Activated T-helper 1 cell treated with anti-CD3 and anti-CD28 coated beads, Interleukin-12 subunit alpha, Interleukin-12 subunit beta, Interleukin-2, Interleukin-4 antibody, amounts not matched to agents 30 ng/mL and 10 ng/mL and 1 ng/mL, durations not matched to agents 14 hours and 24 hours and 36 hours (primary cell): ENCODE measurements at regions of chr5 and their contacts with region 1.

Region 1: DNA sequence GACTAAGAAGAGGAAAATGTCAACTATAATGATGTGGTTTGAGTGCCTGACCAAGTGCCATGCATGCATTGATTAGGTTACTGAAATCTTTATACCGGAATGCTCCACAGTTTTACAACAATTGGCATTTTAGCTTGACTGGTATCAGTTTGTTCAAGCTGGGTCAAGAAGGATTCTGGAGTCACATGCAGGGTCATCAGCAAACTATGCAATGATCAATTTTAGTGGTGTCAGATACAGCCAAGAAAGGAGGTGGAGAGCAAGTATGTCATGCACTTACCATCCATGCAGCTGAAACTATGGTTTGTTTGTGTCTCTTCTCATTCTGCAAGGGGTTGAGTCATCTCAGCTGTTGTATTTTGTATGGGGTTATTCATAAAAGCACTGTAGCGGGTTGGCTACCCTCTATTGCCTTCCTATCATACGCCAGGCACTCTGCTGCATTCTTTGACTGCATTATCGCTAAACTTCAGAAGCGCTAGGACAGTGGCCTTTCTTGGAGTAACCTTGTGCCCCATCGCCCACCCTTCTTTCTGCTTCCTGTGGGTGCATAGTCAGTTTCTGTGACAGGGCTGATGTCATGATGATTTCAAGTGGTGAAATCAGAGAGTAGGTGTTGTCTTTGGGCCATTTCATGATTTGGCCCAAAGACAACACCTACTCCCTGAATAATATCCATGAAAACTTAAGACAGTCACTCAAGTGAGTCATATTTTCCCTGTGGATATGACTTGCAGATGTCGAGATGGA is 145.4 kb downstream of the MTX3 start:
- DNase-seq: peak; percentile 20
- H3K4me3 Mint-ChIP-seq: no peak overlapping the region
- H3K27ac Mint-ChIP-seq: peak overlapping the region; percentile 84
- H3K4me1 Mint-ChIP-seq: peaks cover 26% of the 10 kb centered on the region
- H3K27me3 Mint-ChIP-seq: peaks cover 4% of the 10 kb centered on the region

Region 2: GRCh38 chr5:79235634-79236363 is 609.8 kb before region 1 on chr5 and contains the start of gene JMY:
- intact Hi-C with region 1: loop called (anchors 5 kb)
- DNase-seq: peak; percentile 77
- H3K4me3 Mint-ChIP-seq: peak within 1 kb of the TSS; percentile 94
- H3K27ac Mint-ChIP-seq: peak within 1 kb of the TSS; percentile 95
- H3K4me1 Mint-ChIP-seq: peaks cover 33% of the 10 kb centered on the region
- H3K27me3 Mint-ChIP-seq: peaks cover 2% of the 10 kb centered on the region
- total RNA-seq, gene JMY: 5.5 and 5.9 TPM in 2 replicates

Region 3: DNA sequence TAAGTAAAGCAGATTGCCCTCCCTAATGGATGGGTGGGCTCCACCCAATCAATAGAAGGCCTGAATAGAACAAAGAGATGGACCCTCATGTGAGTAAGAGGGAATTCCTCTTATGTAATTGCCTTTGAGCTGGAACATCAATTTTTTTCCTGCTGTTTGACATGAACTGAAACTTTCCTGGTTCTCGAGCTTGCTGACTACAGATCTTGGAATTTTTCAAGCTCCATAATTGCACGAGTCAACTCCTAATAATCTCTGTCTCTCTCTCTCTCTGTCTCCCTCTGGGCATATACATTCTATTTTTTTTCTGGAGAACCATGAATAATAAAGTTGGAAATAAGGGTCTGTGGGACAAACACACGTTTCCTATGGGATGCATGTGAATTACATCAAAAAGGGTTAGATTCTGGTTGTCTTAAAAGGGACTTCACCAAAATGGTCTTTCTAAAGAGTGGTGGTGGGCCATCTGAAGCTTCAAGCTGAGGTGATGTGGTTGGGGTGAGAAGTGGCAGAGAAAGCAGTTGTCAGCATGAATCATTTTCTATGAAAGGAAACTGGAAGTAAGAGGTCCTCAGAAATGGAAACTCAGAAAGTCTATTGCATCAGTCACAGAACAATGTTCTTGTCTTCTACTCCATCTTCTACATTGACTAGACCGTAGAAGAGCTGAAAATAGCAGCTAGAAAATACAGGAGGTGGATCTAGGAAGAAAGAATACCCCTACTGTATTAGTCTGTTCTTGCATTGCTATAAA is 284.7 kb before region 1 on chr5:
- intact Hi-C with region 1: loop called (anchors 1 kb)
- DNase-seq: peak; percentile 8
- H3K4me3 Mint-ChIP-seq: peak overlapping the region; percentile 67
- H3K27ac Mint-ChIP-seq: peak overlapping the region; percentile 89
- H3K4me1 Mint-ChIP-seq: peaks cover 44% of the 10 kb centered on the region
- H3K27me3 Mint-ChIP-seq: no peaks in the 10 kb centered on the region

Region 4: DNA sequence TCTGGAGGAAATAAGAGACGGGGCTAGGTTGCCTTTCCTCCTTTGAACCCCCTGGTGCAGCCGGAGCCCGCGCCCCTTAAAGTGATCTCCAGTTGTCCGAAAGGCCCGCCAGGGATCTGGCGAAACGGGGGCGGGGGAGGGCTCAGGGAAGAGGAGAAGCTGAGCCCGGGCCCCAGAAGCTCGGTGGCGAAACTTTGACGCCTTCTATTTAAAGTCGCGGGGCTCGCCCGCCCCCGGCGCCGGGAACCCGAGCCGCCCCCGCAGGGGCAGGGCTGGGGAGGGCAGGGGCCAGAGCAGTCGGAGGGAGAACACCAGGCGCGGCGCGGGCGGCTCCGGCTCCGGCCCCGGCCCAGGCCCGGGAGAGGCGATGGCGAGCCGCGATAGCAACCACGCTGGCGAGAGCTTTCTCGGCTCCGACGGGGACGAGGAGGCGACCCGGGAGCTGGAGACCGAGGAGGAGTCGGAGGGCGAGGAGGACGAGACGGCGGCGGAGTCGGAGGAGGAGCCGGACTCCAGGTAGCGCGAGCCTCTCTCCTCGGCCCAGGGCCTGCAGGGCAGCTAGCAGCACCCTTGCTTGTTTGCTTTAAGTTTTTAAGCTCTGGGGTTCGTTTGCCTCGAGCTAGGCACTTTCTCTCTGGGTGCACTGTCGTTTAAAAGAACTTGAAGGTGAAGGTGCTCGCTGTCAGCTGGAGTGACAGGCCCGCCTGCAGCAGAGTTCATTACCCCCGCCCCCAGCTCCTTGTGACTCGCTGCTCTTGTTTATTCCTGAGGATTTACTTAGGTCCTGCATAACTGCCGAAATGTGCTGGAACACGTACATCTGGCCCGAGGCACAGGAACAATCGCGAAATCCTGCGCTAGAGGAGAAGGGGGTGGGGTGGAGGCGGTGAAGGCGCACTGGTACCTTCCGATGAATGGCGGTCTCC is 155.8 kb before region 1 on chr5 and contains the start of gene CMYA5:
- intact Hi-C with region 1: no loop called
- DNase-seq: no peak
- H3K4me3 Mint-ChIP-seq: no peak within 1 kb of the TSS
- H3K27ac Mint-ChIP-seq: no peak within 1 kb of the TSS
- H3K4me1 Mint-ChIP-seq: peaks cover 7% of the 10 kb centered on the region
- H3K27me3 Mint-ChIP-seq: no peaks in the 10 kb centered on the region
- total RNA-seq, gene CMYA5: 0.10 and 0.15 TPM in 2 replicates

Region 5: GRCh38 chr5:79736528-79737514 is 108.8 kb before region 1 on chr5:
- intact Hi-C with region 1: loop called (anchors 1 kb)
- DNase-seq: peak; percentile 2
- H3K4me3 Mint-ChIP-seq: peak overlapping the region; percentile 53
- H3K27ac Mint-ChIP-seq: peak overlapping the region; percentile 46
- H3K4me1 Mint-ChIP-seq: peaks cover 43% of the 10 kb centered on the region
- H3K27me3 Mint-ChIP-seq: peaks cover 50% of the 10 kb centered on the region

Region 6: DNA sequence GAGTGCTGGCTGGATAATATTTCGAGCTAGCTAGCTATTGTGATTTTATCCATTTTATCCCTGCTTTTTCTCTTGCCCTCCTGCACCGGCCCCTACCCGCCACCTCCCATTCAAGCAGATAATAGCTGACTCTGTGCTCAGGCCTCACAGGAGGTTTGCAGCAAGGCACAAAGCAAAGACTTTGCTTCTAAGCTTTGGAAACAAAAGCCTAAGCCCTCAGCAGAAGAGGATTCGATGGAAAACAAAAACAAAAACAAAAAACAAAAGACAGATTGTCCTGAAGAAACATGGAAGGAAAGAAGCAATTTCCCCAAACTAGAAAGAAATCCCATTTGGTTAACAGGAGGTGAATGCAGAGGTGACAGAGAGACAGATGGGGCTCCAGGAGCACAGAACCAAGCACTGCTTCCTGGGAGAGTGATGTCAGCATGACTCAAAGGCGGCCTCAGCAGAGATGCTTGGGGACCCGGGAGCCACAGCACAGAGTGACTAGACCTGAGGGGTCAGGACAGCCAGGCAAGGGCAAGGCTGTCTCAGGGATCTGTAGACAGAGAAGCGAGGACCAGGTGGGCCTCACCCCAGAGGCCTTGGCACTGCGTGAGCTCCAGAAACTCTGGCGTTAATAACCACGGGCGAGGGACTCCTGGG is 117.1 kb after region 1 on chr5:
- intact Hi-C with region 1: loop called (anchors 1 kb)
- DNase-seq: peak; percentile 29
- H3K4me3 Mint-ChIP-seq: peak overlapping the region; percentile 35
- H3K27ac Mint-ChIP-seq: peak overlapping the region; percentile 85
- H3K4me1 Mint-ChIP-seq: peaks cover 39% of the 10 kb centered on the region
- H3K27me3 Mint-ChIP-seq: no peaks in the 10 kb centered on the region